ENCODE measurements at regions of chr1 and their contacts with region 1.

Region 1: GRCh38 chr1:51044834-51045233 is 57.2 kb upstream of the C1orf185 start:
- DNase-seq: no peak
- ATAC-seq: no peak
- H3K4me3 ChIP-seq: no peak overlapping the region
- H3K27ac ChIP-seq: no peak overlapping the region
- H3K4me1 ChIP-seq: no peaks in the 10 kb centered on the region
- H3K27me3 ChIP-seq: no peaks in the 10 kb centered on the region

Region 2: GRCh38 chr1:50774759-50775351 is 270.0 kb before region 1 on chr1:
- intact Hi-C with region 1: loop called (anchors 5 to 10 kb)
- DNase-seq: no peak
- ATAC-seq: peak in 1 of 2 donors; percentile 32
- H3K4me3 ChIP-seq: no peak overlapping the region
- H3K27ac ChIP-seq: no peak overlapping the region
- H3K4me1 ChIP-seq: no peaks in the 10 kb centered on the region
- H3K27me3 ChIP-seq: no peaks in the 10 kb centered on the region

Region 3: GRCh38 chr1:50929376-50929958 is 115.4 kb before region 1 on chr1:
- intact Hi-C with region 1: loop called in 2 of 4 experiments (anchors 5 to 10 kb)
- DNase-seq: no peak
- ATAC-seq: no peak
- H3K4me3 ChIP-seq: no peak overlapping the region
- H3K27ac ChIP-seq: no peak overlapping the region
- H3K4me1 ChIP-seq: peaks cover 3% of the 10 kb centered on the region
- H3K27me3 ChIP-seq: no peaks in the 10 kb centered on the region

Measured in right cardiac atrium (tissue), 5 donors.